Transverse colon (tissue), 4 donors: ENCODE measurements at regions of chr7 and their contacts with region 1.

Region 1: GRCh38 chr7:1044191-1045068 is at the start of gene GPR146:
- DNase-seq: peak; percentile 98
- H3K4me3 ChIP-seq: peak within 1 kb of the TSS; percentile 53 to 78 (median 72)
- H3K27ac ChIP-seq: peak within 1 kb of the TSS; percentile 85 to 94 (median 94)
- H3K4me1 ChIP-seq: peaks cover 21 to 67% (median 40%) of the 10 kb centered on the region in 4 donors
- H3K27me3 ChIP-seq: no peaks in the 10 kb centered on the region
- CTCF ChIP-seq: peak; percentile 57 to 84 (median 70)
- EP300 ChIP-seq: no peak
- POLR2A ChIP-seq: peak; percentile 57
- total RNA-seq, gene GPR146: 9.2 to 14.5 TPM in 2 of 4 donors, not detected in the others

Region 2: DNA sequence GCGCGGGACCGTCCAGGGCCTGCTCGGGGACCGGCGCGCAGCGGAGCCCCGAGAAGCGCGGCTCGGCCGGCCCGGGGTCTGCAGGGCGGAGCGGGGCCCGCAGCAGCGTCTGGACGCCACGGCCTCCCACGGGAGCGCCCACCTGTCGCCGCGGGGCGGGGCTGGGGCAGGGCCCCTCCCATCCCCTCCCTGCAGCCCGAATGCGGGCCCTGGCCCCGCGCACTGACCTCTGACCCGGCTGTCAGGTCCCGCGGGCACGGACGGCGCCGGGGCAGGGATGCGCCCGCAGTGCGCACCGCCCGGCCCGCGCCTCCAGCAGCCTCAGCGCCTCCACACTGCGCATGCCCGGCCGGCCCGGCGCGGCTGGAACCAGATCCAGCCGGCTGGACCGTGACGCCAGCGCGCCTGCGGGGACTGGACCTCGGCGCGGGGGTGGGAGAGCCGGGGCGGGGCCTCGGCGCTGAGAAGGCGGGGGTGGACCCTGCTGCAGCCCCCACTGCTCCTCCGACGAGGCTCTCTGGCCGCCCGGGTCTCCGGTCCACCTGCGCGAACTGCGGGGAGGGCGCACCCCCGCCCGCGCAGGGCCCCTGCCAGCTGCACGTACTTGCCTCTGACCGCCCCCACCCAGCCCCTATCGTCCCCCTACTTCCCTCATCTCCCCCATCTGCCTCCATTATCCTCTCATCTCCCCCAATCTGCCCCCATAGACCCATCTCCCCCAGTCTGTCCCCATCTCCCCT is 16.2 kb before region 1 on chr7:
- in situ Hi-C with region 1: no loop called
- intact Hi-C with region 1: loop called (anchors 2 kb)
- DNase-seq: peak; percentile 93
- H3K4me3 ChIP-seq: peak overlapping the region; percentile 65 to 93 (median 76)
- H3K27ac ChIP-seq: peak overlapping the region; percentile 90 to 97 (median 94)
- H3K4me1 ChIP-seq: peaks cover 15 to 27% (median 21%) of the 10 kb centered on the region in 4 donors
- H3K27me3 ChIP-seq: no peaks in the 10 kb centered on the region
- CTCF ChIP-seq: no peak
- EP300 ChIP-seq: no peak
- POLR2A ChIP-seq: peak; percentile 36